ENCODE measurements at regions of chr11 and their contacts with region 1.

Region 1: DNA sequence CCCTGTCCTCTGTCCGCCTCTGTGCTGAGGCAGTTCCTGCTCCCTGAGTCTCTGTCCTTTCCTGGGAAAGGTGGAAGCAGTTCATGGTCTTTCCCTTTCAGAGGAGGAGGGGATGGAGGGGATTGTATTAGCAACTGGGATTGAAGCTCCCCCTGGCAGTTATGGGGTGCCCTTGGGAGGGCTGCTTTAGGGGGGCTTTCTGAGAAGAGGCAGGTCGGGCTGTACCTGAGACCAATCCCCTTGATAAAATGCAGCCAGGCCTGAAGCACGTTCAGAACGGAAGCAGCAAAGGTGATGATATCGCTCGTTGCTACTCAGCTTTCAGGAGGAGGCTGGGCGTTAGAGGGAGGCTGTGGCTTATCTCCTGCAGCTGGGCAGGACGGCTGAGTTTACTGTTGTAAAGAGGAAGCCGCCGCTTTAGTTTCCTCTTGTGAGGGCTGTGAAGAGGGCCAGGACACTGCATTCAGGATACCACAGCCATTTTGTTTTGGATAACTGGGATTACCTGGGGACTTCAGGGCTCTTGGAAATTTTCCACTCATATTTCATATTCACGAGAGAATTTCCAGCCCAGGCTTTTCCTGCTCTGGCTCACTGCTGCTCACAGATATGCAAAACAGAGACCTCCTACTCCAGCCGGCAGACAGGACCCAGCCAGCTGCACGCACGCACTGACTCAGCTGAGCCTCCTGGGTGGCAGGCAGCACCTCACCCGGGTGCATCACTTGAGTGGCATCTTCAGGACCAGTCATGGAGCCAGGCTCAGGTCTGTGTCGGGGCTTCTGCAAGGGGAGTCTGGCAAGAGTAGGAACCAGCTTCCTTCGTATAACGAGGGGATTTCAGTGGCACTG is 798 bp downstream of the AMPD3 start:
- DNase-seq: peak; percentile 69
- ATAC-seq: peak; percentile 70
- H3K4me3 Mint-ChIP-seq: peak overlapping the region; percentile 87
- H3K27ac Mint-ChIP-seq: peak overlapping the region; percentile 96
- H3K4me1 Mint-ChIP-seq: peaks cover 95% of the 10 kb centered on the region
- H3K27me3 Mint-ChIP-seq: no peaks in the 10 kb centered on the region
- CTCF ChIP-seq: no peak

Region 2: GRCh38 chr11:9314291-9315036 is 1141.4 kb before region 1 on chr11 and contains the start of gene TMEM41B:
- CTCF ChIA-PET with region 1: no interaction called
- POLR2A ChIA-PET with region 1: no interaction called
- intact Hi-C with region 1: loop called (anchors 10 kb)
- DNase-seq: peak; percentile 100
- ATAC-seq: peak; percentile 96
- H3K4me3 Mint-ChIP-seq: peak within 1 kb of the TSS; percentile 98
- H3K27ac Mint-ChIP-seq: peak within 1 kb of the TSS; percentile 95
- H3K4me1 Mint-ChIP-seq: peaks cover 49% of the 10 kb centered on the region
- H3K27me3 Mint-ChIP-seq: peaks cover 4% of the 10 kb centered on the region
- CTCF ChIP-seq: no peak
- total RNA-seq, gene TMEM41B: 19.4 and 21.7 TPM in 2 replicates

Region 3: DNA sequence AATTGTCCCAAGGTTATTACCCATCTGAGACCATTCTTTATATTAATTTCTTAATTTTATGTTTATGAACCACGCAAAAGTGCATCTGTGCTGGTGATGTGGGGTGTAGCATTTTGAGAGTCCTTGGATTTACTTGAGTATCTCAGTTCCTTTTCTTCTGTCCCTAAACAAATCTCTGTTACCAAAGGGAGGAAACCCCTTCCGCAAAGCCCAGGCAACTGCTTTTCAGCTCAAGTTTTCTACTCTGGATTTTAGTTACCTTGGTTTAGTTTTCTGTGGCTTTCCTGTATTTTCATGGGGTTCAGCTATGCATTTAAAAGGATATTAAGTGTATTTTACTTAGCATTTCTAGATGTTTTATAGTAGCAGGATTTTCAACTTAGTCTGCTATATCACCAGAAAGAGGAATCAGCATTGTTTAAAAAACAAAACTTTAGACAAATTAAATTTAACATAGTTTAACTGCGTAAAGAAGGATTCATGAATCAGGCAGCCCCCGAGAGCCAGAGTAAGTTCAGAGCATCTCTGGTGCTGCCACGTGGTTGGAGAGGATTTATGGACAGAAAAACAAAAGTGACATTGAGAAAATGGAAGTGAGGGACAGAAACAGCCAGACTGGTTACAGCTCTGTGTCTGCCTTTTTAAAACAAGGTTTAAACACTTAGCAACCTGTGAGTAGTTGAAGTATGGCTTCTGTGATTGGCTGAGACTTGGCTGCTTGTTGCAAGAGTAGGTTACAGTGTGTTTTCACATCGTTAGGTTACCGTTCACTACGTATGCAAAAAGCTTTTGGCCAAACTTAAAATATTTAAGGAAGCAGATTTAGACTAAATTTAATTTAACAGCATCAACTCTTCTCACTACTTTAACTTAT is 141.4 kb before region 1 on chr11:
- CTCF ChIA-PET with region 1: no interaction called
- POLR2A ChIA-PET with region 1: no interaction called
- intact Hi-C with region 1: loop called (anchors 10 kb)
- DNase-seq: no peak
- ATAC-seq: peak; percentile 80
- H3K4me3 Mint-ChIP-seq: no peak overlapping the region
- H3K27ac Mint-ChIP-seq: no peak overlapping the region
- H3K4me1 Mint-ChIP-seq: peaks cover 28% of the 10 kb centered on the region
- H3K27me3 Mint-ChIP-seq: peaks cover 2% of the 10 kb centered on the region
- CTCF ChIP-seq: no peak

Region 4: DNA sequence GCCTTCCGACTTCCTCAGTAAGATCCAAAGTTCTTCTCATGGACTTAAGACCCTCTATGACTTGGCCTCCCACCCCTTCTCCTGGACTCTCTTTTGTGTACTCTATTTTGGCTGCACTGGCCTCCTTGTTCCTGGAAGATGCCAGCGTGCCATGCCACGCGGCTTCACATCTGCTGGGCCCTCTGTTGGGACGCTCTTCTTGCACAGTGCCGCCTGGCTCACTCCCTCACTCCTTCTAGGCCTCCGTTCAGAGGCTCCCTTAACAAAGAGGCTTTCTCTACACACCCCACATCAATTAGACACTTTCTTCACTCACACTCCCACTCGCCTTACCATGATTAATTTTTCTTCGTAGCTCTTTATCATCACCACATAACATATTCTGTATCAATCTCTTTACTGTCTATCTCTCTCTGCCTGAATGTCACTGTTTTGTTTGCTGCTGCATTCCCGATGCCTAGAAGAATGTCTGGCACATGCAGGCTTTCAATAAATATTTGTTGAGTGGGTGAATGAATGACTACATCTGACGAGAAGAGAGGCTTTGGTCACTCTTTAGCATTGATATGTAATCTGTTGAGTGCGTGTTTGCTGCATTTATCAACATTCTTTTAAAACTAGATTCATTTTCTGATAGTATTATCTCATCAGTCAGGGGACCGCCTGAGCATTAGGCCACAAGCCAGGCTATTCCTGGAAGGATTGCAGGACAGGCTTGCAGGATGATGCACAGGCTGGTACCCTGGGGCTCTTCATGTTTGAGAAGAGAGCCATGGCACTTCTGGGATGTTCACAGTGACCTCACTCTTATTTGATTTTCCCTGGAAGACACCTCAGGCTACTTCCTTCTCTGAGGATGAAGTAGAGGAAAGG is 61.4 kb before region 1 on chr11:
- CTCF ChIA-PET with region 1: no interaction called
- POLR2A ChIA-PET with region 1: no interaction called
- intact Hi-C with region 1: no loop called
- DNase-seq: no peak
- ATAC-seq: no peak
- H3K4me3 Mint-ChIP-seq: no peak overlapping the region
- H3K27ac Mint-ChIP-seq: no peak overlapping the region
- H3K4me1 Mint-ChIP-seq: no peaks in the 10 kb centered on the region
- H3K27me3 Mint-ChIP-seq: peaks cover 32% of the 10 kb centered on the region
- CTCF ChIP-seq: no peak

Region 5: DNA sequence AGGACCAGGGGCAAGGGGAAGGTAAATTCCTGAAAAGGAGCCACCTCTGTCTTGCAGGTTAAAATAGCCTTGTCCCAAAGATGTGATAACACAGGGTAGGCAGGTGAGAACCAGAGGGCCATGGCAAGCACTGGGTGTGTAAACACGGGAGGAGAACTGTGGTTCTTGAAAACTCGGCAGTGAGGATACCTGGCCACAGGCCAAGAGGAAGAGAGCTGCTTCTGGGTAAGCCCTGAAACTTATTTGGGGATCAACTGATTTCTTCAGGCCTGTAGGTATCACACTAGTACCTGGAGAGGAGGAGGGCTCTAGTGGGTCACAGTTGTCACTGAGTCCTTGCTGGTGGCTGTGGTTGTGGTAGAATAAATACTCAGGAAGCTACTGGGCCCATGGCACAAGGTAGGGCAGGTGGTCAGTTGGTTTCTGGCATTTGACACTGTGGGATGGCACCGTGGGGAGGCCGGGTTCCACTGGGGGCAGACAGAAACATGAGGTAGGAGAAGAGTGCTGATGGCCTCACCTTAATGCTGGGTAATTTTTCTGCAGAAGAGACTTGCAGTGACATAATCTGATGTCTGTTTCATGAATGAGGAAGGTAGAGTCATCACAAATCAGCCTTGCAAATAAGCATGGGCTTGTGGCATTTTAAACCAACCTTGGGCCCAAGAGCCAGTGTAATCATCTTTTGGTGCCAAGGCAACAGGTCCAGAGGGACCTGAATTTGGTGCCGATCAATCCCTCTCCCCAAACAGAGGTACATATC is 21.2 kb after region 1 on chr11:
- CTCF ChIA-PET with region 1: interaction called, 3 read pairs
- POLR2A ChIA-PET with region 1: interaction called, 7 read pairs
- intact Hi-C with region 1: loop called (anchors 1 kb)
- DNase-seq: no peak
- ATAC-seq: peak; percentile 70
- H3K4me3 Mint-ChIP-seq: peak overlapping the region; percentile 28
- H3K27ac Mint-ChIP-seq: peak overlapping the region; percentile 83
- H3K4me1 Mint-ChIP-seq: peaks cover 55% of the 10 kb centered on the region
- H3K27me3 Mint-ChIP-seq: no peaks in the 10 kb centered on the region
- CTCF ChIP-seq: no peak

Region 6: GRCh38 chr11:10534316-10534715 is 78.5 kb after region 1 on chr11:
- CTCF ChIA-PET with region 1: interaction called, 3 read pairs
- POLR2A ChIA-PET with region 1: interaction called, 10 read pairs
- intact Hi-C with region 1: no loop called
- DNase-seq: no peak
- ATAC-seq: peak; percentile 5
- H3K4me3 Mint-ChIP-seq: no peak overlapping the region
- H3K27ac Mint-ChIP-seq: peak overlapping the region; percentile 5
- H3K4me1 Mint-ChIP-seq: peaks cover 52% of the 10 kb centered on the region
- H3K27me3 Mint-ChIP-seq: no peaks in the 10 kb centered on the region
- CTCF ChIP-seq: no peak

Region 7: DNA sequence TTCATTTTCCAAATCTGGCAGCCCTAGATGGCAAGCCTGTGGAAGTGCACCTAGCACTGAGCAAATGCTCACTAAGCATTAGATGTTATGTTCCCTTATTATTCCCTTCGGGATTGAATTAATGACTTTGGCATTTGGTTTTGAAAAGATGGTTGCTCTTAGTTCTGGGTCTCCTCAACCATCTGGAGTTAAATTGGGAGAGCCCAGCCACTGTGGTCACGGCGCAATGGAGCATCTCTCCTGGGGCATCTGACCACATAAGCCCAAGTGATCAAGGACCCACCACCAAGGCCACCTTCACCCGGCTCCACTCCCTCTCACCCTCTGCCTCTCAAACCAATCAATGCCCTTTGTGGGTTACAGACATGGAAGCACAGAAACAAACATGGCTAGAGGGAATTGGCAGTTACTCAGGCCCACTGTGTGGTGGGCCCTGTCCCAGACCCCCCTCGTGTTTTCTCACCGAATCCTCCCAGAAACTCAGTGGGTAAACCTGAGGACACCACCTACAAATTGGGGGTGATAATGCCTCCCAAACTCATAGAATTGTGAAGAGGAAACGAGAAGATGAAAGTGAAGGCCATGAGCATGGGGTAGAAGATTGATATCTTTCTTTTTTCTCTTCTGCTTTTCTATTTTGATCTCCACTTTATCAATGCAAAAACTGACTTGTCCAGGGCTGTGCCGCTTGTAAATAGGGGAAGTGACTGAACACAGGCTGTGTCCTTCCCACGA is 185.5 kb after region 1 on chr11:
- CTCF ChIA-PET with region 1: no interaction called
- POLR2A ChIA-PET with region 1: interaction called, 7 read pairs
- intact Hi-C with region 1: loop called (anchors 1 kb)
- DNase-seq: no peak
- ATAC-seq: peak; percentile 84
- H3K4me3 Mint-ChIP-seq: peak overlapping the region; percentile 62
- H3K27ac Mint-ChIP-seq: peak overlapping the region; percentile 96
- H3K4me1 Mint-ChIP-seq: peaks cover 83% of the 10 kb centered on the region
- H3K27me3 Mint-ChIP-seq: no peaks in the 10 kb centered on the region
- CTCF ChIP-seq: no peak